Activated CD8-positive, alpha-beta memory T cell treated with anti-CD3 and anti-CD28 coated beads, Interleukin-2, amount 10 ng/mL, durations not matched to agents 7 days and 5 days (primary cell): ENCODE measurements at regions of chr15 and their contacts with region 1.

Region 1: GRCh38 chr15:59247364-59247763 is 40.7 kb downstream of the LDHAL6B start:
- DNase-seq: peak; percentile 81
- ATAC-seq: peak; percentile 77
- H3K4me3 Mint-ChIP-seq: no peak overlapping the region
- H3K27ac Mint-ChIP-seq: peak overlapping the region; percentile 59
- H3K4me1 Mint-ChIP-seq: peaks cover 39% of the 10 kb centered on the region
- H3K27me3 Mint-ChIP-seq: peaks cover 2% of the 10 kb centered on the region

Region 2: DNA sequence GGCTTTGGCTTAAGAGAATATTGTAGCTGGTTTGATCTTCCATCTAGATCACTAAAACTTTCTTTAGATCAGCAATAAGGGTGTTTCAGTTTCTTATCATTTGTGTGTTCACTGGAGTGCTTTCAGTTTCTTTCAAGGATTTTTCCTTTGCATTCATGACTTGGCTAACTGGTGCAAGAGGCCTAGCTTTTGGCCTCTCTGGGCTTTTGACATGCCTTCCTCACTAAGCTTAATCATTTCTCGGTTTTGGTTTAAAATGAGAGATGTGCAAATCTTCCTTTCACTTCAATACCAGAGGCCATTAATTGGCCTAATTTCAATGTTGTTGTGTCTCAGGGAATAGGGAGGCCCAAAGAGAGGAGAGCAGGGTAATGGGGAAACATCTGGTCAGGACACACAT is 172.8 kb before region 1 on chr15:
- CTCF ChIA-PET with region 1: no interaction called
- DNase-seq: no peak
- ATAC-seq: no peak
- H3K4me3 Mint-ChIP-seq: no peak overlapping the region
- H3K27ac Mint-ChIP-seq: peak overlapping the region; percentile 64
- H3K4me1 Mint-ChIP-seq: peaks cover 15% of the 10 kb centered on the region
- H3K27me3 Mint-ChIP-seq: no peaks in the 10 kb centered on the region

Region 3: DNA sequence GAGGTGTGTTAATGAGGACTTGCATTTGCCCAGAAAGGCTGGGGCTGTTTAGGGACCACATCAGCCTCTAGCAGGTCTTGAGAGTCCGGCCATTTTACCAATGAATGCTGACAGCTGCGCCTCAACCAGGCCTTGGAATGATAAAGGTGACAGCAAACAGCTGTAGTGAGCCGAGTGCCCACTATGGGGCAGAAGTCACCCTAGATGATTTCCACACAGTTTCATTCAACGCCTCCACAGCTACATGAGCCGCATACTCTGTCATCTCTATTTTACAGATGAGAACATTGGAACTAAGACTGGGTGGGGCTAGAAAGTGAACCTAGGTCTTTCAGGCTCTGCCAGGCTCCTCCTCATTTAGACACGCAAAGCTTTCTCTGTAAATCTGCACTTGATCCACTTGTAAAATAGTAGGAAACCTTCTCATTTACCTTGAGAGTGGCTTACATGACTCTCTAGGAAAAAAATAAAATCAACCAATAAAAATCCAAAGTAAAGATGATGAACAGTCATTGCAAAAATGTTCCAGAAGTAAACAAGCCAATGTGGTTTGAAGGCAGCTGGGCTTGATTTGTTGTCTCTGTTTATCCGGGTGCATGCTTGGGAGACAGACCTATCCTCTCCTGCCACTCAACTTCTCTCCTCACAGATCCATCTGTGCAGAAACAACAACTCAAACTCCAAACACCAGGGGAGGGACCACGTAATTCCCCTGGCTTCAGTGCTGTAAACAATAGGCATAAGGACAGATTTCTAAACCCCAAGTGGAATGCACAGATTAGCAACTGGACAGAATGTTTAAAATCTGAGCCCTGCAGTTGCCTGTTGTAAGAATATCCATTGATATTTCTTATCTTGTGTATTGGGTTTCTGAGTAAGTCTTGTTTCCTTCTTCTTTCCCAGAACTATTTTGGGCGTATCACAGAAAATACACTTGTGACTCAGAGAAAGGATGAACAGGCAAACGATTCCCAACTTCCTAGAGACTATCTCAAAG is 72.2 kb before region 1 on chr15:
- CTCF ChIA-PET with region 1: interaction called, 11 read pairs
- DNase-seq: peak; percentile 63
- ATAC-seq: peak; percentile 91
- H3K4me3 Mint-ChIP-seq: no peak overlapping the region
- H3K27ac Mint-ChIP-seq: no peak overlapping the region
- H3K4me1 Mint-ChIP-seq: peaks cover 17% of the 10 kb centered on the region
- H3K27me3 Mint-ChIP-seq: peaks cover 4% of the 10 kb centered on the region

Region 4: DNA sequence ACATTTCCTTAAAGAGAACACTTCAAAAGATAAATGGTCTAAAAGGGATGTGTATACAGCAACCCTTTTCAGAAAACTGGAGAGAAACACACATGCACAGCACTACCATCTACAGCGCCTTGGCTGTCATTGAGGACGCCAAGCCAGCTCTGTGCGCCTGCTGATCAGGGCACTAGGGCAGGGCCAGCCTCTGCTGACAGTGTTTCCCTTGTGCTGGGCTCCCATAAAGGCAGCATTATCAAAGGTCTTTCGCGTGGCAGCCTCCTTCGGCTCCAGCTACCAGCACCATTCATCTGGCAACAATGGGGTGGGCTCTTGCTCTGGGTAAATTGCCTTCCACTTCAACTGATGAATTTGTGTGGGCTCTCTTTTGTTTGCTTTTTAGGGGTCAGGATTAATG is 12.7 kb after region 1 on chr15:
- CTCF ChIA-PET with region 1: interaction called, 13 read pairs
- DNase-seq: no peak
- ATAC-seq: no peak
- H3K4me3 Mint-ChIP-seq: no peak overlapping the region
- H3K27ac Mint-ChIP-seq: no peak overlapping the region
- H3K4me1 Mint-ChIP-seq: peaks cover 40% of the 10 kb centered on the region
- H3K27me3 Mint-ChIP-seq: peaks cover 7% of the 10 kb centered on the region

Region 5: DNA sequence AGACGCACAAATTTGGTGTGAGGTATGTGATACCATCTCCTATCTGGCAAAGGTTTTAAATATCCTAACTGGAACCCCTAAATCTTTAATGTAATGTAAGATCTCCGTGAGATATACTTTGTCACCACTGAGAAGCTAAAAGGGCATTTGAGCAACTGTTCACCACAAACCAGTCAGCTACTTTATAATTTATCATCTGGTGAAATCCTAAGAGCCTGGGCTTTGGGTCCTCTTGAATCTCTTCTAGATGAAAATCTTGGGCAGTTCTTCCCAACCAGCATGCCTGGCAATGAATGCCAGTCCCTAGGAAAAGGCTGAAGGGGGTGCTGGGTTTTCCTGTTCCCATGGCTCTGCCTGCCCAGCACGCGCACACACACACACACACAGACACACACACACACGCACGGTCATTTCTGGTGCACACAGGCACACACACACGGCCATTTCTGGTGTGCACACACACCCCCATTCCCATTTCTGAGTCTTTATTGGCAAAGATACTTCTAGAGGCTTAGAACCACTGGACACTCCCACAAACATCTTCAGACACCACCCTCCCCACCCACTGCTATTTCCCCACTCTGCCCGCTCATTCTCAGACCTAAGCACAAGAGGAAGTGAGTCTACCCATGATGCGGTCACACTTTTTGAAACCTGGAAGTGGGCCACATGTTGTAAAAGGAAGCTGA is 52.7 kb after region 1 on chr15:
- CTCF ChIA-PET with region 1: interaction called, 15 read pairs
- DNase-seq: peak; percentile 92
- ATAC-seq: peak; percentile 93
- H3K4me3 Mint-ChIP-seq: peak overlapping the region; percentile 67
- H3K27ac Mint-ChIP-seq: peak overlapping the region; percentile 90
- H3K4me1 Mint-ChIP-seq: peaks cover 73% of the 10 kb centered on the region
- H3K27me3 Mint-ChIP-seq: no peaks in the 10 kb centered on the region

Region 6: DNA sequence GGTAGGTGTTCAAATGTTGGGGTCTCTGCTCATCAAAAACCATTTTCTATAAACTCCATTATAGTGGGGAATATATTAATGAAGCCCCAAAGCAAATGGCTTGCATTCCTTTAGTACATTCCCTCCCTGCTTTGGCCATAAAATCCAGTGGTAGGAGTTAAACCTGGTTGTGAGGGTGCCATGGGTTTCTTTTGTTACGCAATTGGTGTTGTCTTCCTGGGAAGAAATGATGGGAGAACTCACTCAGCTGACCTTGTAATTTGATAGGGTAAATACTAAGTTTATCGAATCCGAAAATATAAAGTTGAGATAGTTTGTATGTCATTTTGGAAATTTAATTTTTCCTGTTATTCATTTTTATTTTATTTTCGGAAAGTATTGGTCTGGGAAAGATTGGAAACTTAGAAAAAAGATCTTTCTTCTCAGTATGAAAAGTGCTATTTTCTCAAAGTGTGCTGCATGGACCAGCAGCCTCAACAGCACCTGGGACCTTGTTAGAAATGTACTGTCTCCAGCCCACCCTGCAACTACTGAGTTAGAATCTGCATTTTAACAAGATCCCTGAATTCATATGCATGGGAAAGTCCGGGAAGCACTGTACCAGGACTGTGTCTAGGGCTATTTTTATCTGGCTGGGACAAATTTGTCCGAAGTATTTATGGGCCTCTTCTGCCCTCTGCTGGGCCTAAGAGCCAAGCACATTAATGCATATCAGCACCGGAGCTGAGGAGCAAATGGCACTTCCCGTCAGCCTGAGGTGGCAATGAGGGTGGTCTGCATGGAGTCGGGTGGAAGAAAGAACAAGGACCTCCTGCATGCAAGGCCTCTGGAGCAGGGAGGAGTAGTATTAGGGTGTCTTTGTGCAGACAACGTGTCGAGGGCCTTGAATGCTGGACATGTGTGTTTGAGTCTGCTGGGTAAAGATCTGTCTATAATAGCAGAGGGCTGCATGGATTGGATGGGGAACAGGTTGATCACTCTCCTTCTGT is 245.3 kb after region 1 on chr15:
- CTCF ChIA-PET with region 1: interaction called, 13 read pairs
- DNase-seq: peak; percentile 66
- ATAC-seq: peak; percentile 87
- H3K4me3 Mint-ChIP-seq: no peak overlapping the region
- H3K27ac Mint-ChIP-seq: no peak overlapping the region
- H3K4me1 Mint-ChIP-seq: peaks cover 2% of the 10 kb centered on the region
- H3K27me3 Mint-ChIP-seq: peaks cover 17% of the 10 kb centered on the region